ENCODE measurements at regions of chr9 and their contacts with region 1.

Region 1: DNA sequence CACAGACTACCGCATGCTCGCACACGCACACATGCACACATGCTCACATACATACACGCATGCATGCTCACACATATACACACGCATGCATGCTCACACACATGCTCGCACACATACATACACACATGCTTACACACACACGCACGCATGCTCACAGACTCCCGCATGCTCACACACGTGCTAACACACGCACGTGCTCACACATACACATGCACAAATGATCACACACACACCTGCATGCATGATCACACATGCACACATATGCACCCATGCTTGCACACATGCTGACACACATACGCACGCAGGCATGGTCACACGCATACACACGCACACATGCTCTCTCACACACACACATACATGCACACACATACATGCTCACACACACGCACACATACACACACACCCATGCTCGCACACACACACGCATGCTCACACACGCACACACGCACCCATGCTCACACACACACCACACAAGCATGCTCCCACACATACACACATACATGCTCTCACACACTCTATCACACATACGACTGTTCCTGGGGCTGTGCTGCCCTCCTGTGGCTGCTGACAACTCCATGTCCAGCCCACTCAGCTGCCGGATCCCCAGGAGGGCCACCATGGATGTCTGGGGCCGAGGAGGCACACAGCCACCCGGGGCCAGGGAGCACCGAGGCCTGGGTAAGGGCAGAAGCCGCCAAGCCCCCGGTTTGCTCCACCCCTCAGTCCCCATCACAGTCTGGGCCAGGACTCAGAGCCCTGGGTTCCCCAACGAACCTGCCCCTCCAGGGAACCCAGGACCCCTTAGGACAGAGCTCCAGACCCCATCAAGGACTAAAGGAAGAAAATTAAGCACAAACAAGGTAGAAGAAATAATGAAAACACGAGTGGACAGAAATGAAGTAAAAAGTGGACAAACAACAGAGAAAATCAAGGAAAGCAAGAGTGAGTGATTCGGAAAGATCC is 31.4 kb upstream of the EGFL7 start:
- DNase-seq: peak; percentile 27 to 86
- H3K4me3 ChIP-seq: no peak overlapping the region
- H3K27ac ChIP-seq: no peak overlapping the region; the same call in 1 of the 2 replicates
- H3K4me1 ChIP-seq: peaks cover 0 to 9% (median 0%) of the 10 kb centered on the region in 4 experiments; a peak in 3 of 7 replicates
- H3K27me3 ChIP-seq: no peaks in the 10 kb centered on the region
- CTCF ChIP-seq: peak in 2 of 3 experiments; percentile 86 to 87; a peak in 3 of 4 replicates
- EP300 ChIP-seq: no peak
- POLR2A ChIP-seq: no peak
- RAD21 ChIP-seq: peak; percentile 94 to 95

Region 2: GRCh38 chr9:136521537-136521936 is 109.8 kb before region 1 on chr9:
- CTCF ChIA-PET with region 1: interaction called, 53 read pairs
- POLR2A ChIA-PET with region 1: no interaction called
- DNase-seq: no peak
- H3K4me3 ChIP-seq: no peak overlapping the region
- H3K27ac ChIP-seq: no peak overlapping the region
- H3K4me1 ChIP-seq: peaks cover 0 to 4% (median 3%) of the 10 kb centered on the region in 4 experiments; a peak in 3 of 7 replicates
- H3K27me3 ChIP-seq: no peaks in the 10 kb centered on the region
- CTCF ChIP-seq: no peak
- EP300 ChIP-seq: no peak
- POLR2A ChIP-seq: no peak
- RAD21 ChIP-seq: no peak

Region 3: DNA sequence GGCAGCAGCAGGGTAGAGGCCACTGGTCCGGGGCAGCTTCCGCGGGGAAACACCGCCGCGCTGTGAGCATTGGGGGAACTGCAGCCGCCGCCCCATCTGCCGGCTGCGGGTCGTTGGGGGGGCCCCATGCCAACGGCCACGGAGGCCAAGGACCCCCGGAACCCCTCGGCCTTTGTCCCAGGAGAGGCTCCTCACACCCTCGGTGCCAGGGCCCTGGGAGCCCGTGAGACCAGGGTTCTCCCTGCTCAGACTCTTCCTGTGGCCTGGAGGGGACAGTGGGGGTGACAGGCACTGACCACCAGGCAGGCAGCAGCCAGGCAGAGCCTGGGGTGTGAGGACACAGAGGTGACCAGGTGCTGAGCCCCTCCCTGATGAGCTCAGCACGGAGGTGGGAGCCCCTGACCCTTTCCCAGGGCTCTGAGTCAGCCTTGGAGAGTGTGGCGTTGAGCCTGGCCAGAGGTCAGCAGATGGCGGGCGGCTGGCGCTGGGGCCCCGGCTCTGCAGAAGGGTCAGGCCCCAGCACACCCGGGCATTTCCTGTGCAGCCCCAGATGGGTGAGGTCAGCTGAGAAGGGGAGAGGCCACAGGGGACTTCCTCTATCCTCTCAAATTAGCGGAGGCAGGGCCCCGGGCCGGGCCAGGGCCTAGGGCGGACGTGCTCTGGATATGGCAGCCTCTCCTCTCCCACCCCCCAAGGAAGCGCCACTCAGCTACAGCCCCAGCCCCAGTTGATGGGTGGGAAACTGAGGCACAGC is 13.5 kb after region 1 on chr9:
- CTCF ChIA-PET with region 1: interaction called, 23 read pairs
- POLR2A ChIA-PET with region 1: interaction called, 3 read pairs
- DNase-seq: peak in 1 of 2 experiments; percentile 93
- H3K4me3 ChIP-seq: peak overlapping the region in 2 of 4 experiments; percentile 10 to 45; a peak in 1 of 8 replicates
- H3K27ac ChIP-seq: no peak overlapping the region
- H3K4me1 ChIP-seq: peaks cover 0 to 10% (median 3%) of the 10 kb centered on the region in 4 experiments; a peak in 4 of 7 replicates
- H3K27me3 ChIP-seq: peaks cover 0 to 6% (median 0%) of the 10 kb centered on the region in 4 experiments; a peak in 1 of 7 replicates
- CTCF ChIP-seq: peak; percentile 82 to 95 (median 88)
- EP300 ChIP-seq: no peak
- POLR2A ChIP-seq: no peak
- RAD21 ChIP-seq: peak; percentile 84 to 89

Region 4: GRCh38 chr9:136700959-136701667 is 69.8 kb after region 1 on chr9:
- CTCF ChIA-PET with region 1: no interaction called
- POLR2A ChIA-PET with region 1: no interaction called
- DNase-seq: peak in 1 of 2 experiments; percentile 49
- H3K4me3 ChIP-seq: no peak overlapping the region
- H3K27ac ChIP-seq: no peak overlapping the region
- H3K4me1 ChIP-seq: peaks cover 0 to 13% (median 4%) of the 10 kb centered on the region in 4 experiments; a peak in 5 of 7 replicates
- H3K27me3 ChIP-seq: peaks cover 0 to 2% (median 0%) of the 10 kb centered on the region in 4 experiments; a peak in 2 of 7 replicates
- CTCF ChIP-seq: no peak
- EP300 ChIP-seq: no peak
- POLR2A ChIP-seq: no peak
- RAD21 ChIP-seq: no peak

Region 5: DNA sequence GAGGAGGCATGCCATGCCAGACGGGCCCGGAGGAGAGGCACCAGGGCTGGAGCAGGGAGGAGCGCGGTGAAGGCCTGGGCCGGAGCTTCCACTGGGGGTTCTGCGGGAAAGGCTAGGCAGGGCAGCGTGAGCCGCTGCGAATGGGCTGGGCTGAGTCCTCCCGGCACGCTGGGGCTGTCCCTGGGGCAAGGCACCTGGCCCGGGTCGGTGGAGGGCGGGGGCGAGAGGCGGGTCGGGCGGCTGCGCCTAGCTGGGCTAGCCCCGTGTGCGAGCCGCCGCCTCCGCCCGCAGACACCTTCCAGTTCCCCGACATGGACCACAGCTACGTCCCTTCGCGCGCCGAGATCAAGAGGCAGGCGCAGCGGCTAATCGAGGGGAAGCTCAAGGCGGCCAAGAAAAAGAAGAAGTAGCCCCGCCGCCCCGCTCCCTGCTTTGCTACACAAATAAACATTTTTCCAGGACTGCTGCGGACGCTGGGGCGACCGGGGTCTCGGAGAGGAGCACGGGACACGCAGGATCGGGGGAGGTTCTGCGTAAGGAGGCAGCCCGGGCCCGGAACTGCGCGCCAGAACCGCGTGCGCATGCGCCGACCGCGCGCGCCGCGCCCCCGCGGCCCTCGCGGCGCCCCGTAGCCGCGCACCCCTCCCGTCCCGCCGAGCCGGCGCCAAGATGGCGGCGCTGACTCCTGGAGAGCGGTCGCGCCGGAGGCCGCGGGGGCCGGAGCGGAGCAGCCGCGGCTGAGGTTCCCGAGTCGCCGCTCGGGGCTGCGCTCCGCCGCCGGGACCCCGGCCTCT is 176.2 kb after region 1 on chr9 and contains the start of gene RABL6:
- CTCF ChIA-PET with region 1: no interaction called
- POLR2A ChIA-PET with region 1: no interaction called
- DNase-seq: peak in 1 of 2 experiments; percentile 86
- H3K4me3 ChIP-seq: peak within 1 kb of the TSS; percentile 88 to 100 (median 94)
- H3K27ac ChIP-seq: peak within 1 kb of the TSS; percentile 86; the same call in 1 of the 2 replicates
- H3K4me1 ChIP-seq: peaks cover 0 to 10% (median 7%) of the 10 kb centered on the region in 4 experiments; a peak in 6 of 7 replicates
- H3K27me3 ChIP-seq: peaks cover 0 to 16% (median 6%) of the 10 kb centered on the region in 4 experiments; a peak in 2 of 7 replicates
- CTCF ChIP-seq: no peak
- EP300 ChIP-seq: no peak
- POLR2A ChIP-seq: peak in 1 of 2 experiments; percentile 74; a peak in 2 of 3 replicates
- RAD21 ChIP-seq: no peak
- total RNA-seq, gene RABL6: 129 and 130 TPM in 2 replicates